H1 (cell line): ENCODE measurements at regions of chr1 and their contacts with region 1.

Region 1: GRCh38 chr1:153404768-153405167 is 11.6 kb upstream of the S100A7A start:
- DNase-seq: peak; percentile 19 to 86
- H3K4me3 ChIP-seq: no peak overlapping the region
- H3K27ac ChIP-seq: no peak overlapping the region
- H3K4me1 ChIP-seq: no peaks in the 10 kb centered on the region; a peak in 1 of 7 replicates
- H3K27me3 ChIP-seq: peaks cover 0 to 11% (median 8%) of the 10 kb centered on the region in 4 experiments; a peak in 6 of 7 replicates
- CTCF ChIP-seq: peak; percentile 81 to 90 (median 84)
- EP300 ChIP-seq: no peak
- POLR2A ChIP-seq: no peak
- RAD21 ChIP-seq: peak; percentile 31 to 59

Region 2: GRCh38 chr1:153238536-153238935 is 166.2 kb before region 1 on chr1:
- CTCF ChIA-PET with region 1: no interaction called
- POLR2A ChIA-PET with region 1: no interaction called
- DNase-seq: no peak
- H3K4me3 ChIP-seq: no peak overlapping the region
- H3K27ac ChIP-seq: no peak overlapping the region
- H3K4me1 ChIP-seq: no peaks in the 10 kb centered on the region
- H3K27me3 ChIP-seq: no peaks in the 10 kb centered on the region
- CTCF ChIP-seq: peak; percentile 50 to 59 (median 53)
- EP300 ChIP-seq: no peak
- POLR2A ChIP-seq: no peak
- RAD21 ChIP-seq: peak; percentile 58 to 67

Region 3: GRCh38 chr1:153360190-153360927 is 44.4 kb before region 1 on chr1:
- CTCF ChIA-PET with region 1: interaction called, 63 read pairs
- POLR2A ChIA-PET with region 1: no interaction called
- DNase-seq: no peak
- H3K4me3 ChIP-seq: no peak overlapping the region
- H3K27ac ChIP-seq: no peak overlapping the region
- H3K4me1 ChIP-seq: no peaks in the 10 kb centered on the region; a peak in 1 of 7 replicates
- H3K27me3 ChIP-seq: no peaks in the 10 kb centered on the region
- CTCF ChIP-seq: no peak
- EP300 ChIP-seq: no peak
- POLR2A ChIP-seq: no peak
- RAD21 ChIP-seq: no peak

Region 4: GRCh38 chr1:153390938-153391710 is 13.6 kb before region 1 on chr1 and contains the start of gene S100A8:
- CTCF ChIA-PET with region 1: interaction called, 15 read pairs
- POLR2A ChIA-PET with region 1: no interaction called
- DNase-seq: no peak
- H3K4me3 ChIP-seq: no peak within 1 kb of the TSS
- H3K27ac ChIP-seq: no peak within 1 kb of the TSS
- H3K4me1 ChIP-seq: no peaks in the 10 kb centered on the region
- H3K27me3 ChIP-seq: peaks cover 0 to 2% (median 0%) of the 10 kb centered on the region in 4 experiments; a peak in 1 of 7 replicates
- CTCF ChIP-seq: no peak
- EP300 ChIP-seq: no peak
- POLR2A ChIP-seq: no peak
- RAD21 ChIP-seq: no peak
- total RNA-seq, gene S100A8: not detected in 2 replicates